ENCODE measurements at regions of chr22 and their contacts with region 1.

Region 1: DNA sequence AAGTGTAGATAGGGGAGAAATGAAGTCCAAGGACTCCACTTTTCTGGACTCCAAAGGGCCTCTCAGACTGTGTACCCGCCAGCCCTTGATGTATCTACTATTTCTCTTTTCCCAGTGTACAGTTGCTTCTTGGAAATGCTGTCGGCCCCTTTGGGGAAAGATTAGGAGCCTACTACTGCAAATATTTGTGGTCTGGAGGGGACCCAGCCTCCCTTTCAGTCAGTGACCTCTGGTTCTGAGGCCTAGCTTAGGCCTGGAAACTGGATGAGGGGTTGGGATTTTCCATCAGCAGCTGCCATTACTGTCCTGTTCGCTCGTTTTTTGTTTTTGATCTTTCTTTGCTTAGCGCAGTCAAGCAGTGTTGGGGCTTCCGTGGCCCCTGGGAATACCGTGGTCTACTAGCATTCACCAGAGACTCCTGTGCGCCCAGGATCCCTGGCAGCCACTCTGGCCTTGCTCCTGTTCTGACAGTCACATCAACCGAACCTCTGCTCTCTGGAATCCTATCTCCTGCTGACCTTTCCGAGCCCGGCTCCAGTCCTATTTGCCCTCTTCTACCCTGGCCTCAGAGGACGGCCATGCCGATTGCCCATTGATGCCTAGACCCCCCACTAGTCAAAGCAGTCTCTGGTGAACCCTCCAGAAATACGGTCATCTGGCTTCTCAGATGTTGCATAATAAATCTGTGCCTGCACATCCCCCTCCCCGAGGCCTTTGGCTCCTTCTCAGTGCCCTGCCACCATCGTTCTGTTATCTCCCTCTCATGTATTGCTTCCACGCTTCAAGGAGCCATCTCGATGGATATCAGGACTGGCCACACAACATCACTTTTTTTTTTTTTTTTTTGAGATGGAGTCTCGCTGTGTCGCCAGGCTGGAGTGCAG is 1.3 kb upstream of the RRP7A start:
- DNase-seq: no peak
- H3K4me3 ChIP-seq: no peak overlapping the region
- H3K27ac ChIP-seq: no peak overlapping the region
- H3K4me1 ChIP-seq: peaks cover 10% of the 10 kb centered on the region
- H3K27me3 ChIP-seq: no peaks in the 10 kb centered on the region
- CTCF ChIP-seq: no peak
- POLR2A ChIP-seq: no peak

Region 2: DNA sequence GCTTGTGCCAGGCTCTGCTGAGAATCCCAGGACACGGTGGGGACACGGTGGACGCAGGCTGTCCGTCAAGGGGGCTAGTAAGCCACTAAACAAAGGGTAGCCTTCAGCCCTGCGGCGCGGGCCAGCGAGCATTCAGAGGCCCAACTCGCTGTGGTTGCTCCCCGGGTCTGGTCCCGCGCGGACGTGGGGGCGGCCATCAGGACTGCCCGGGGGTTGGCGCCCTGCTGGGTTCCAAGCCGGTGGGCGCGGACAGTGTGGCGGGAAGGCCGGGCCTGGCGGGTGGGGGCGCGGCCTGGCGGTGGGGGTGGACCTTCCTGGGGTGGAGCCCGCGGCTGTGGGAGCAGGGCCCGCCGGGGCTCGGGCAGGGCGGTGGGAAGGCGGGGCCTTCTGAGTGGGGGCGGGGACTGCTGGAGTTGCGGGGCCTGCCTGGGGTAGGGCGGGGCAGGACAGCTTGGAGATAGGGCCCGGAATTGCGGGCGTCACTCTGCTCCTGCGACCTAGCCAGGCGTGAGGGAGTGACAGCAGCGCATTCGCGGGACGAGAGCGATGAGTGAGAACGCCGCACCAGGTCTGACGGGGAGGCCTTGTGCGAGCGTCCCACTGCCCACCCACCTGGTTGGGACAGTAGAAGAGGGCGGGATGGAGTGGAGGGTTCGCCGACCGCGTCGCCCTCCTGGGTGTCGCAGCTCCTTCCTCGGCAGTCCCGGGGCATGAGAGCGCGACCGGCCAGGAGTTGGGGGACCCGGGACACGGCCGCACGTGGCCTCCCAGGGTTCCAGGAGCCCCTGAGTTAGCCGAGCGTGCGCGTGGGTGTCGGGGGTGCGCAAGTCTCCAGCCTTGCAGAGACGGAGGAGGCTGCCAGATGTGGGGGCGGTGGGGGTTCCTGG is 32.8 kb after region 1 on chr22 and contains the start of gene SERHL2:
- CTCF ChIA-PET with region 1: no interaction called
- POLR2A ChIA-PET with region 1: no interaction called
- dilution Hi-C with region 1: no loop called
- intact Hi-C with region 1: loop called (anchors 2 kb)
- DNase-seq: peak; percentile 87
- H3K4me3 ChIP-seq: peak within 1 kb of the TSS; percentile 47 to 60 (median 49)
- H3K27ac ChIP-seq: no peak within 1 kb of the TSS
- H3K4me1 ChIP-seq: no peaks in the 10 kb centered on the region
- H3K27me3 ChIP-seq: peaks cover 0 to 9% of the 10 kb centered on the region in 2 experiments
- CTCF ChIP-seq: no peak
- POLR2A ChIP-seq: no peak
- total RNA-seq, gene SERHL2: 0.76 and 0.80 TPM in 2 replicates

Measured in endothelial cell of umbilical vein (primary cell).